Calu3 (cell line): ENCODE measurements at regions of chr4 and their contacts with region 1.

Region 1: DNA sequence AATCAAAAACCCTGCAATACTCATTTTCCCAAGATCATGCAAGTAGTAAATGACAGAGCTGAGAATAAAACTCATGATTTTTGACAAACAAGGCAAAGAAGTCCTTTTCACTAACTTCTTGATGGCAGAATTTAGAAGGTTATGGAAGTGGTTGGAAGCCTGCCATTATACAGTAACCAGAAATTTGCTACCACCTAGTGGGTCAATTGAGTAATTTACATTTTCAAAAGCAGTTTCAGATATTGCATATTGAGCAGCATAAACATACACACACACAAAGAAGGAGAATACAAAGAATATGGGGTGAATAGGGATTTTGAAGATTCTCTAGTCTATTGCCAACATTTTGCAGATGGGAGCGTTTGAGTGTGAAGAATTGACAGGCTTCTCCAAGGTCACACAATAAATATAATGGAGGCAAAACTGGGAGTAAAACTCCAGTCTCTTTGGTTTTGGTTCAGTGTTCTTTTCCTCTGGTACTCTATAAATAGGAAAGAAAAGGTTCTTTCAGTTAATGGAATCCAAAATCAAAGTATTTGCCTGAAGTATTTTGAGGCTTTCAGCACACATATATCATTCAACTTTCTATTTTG is 70.2 kb downstream of the GC start:
- DNase-seq: no peak
- H3K4me3 Mint-ChIP-seq: no peak overlapping the region
- H3K27ac Mint-ChIP-seq: no peak overlapping the region
- H3K4me1 Mint-ChIP-seq: peaks cover 9% of the 10 kb centered on the region
- H3K27me3 Mint-ChIP-seq: no peaks in the 10 kb centered on the region
- CTCF ChIP-seq: peak; percentile 44

Region 2: GRCh38 chr4:70651864-70652506 is 1061.7 kb before region 1 on chr4:
- CTCF ChIA-PET with region 1: no interaction called
- intact Hi-C with region 1: loop called (anchors 2 kb)
- DNase-seq: no peak
- H3K4me3 Mint-ChIP-seq: no peak overlapping the region
- H3K27ac Mint-ChIP-seq: no peak overlapping the region
- H3K4me1 Mint-ChIP-seq: no peaks in the 10 kb centered on the region
- H3K27me3 Mint-ChIP-seq: no peaks in the 10 kb centered on the region
- CTCF ChIP-seq: peak; percentile 29

Region 3: DNA sequence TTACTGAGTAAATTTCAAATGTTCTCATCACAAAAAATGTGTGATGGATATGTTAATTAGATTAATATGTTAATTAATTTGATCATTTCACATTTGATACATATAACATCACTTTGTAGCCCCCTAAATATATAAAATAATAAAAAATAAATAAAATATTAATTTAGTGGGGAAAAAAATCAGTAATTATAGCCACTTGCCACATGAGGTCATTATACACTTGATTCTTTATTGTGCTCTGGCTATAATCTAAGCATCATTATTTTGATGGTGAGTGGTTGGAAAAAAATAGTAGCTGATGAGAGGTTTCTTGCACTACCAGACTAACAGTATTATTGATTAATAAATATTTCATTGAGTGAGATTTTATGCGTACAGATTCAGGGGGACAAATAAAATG is 662.9 kb before region 1 on chr4:
- CTCF ChIA-PET with region 1: interaction called, 4 read pairs
- intact Hi-C with region 1: loop called (anchors 2 kb)
- DNase-seq: no peak
- H3K4me3 Mint-ChIP-seq: no peak overlapping the region
- H3K27ac Mint-ChIP-seq: no peak overlapping the region
- H3K4me1 Mint-ChIP-seq: no peaks in the 10 kb centered on the region
- H3K27me3 Mint-ChIP-seq: no peaks in the 10 kb centered on the region
- CTCF ChIP-seq: no peak

Region 4: DNA sequence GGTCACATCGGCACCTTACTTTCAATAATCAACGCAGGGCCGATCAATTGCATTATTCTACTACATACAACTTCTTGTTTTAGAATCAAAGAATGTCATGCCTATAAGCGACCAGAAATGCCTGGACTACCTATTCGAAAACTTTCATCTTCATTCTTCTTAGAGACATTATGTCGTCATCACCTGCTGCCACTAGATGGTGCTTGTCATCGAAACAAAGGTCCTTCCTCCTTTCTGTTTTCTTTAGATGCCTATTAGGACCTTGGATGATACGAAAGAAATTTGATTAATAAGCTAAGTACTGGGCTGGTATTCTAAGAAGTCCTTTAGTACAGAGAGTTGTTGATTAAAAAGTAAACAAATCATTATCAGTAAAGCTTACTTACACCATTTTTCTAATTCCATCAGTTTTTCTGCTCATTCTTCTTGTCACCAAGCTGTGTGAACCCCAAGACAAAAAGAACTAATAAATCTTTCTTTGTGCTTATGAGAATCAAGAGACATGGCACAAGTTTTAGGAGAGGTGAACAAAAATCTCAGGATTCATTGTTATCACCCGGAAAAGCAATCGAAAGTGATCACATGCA is 529.4 kb before region 1 on chr4:
- CTCF ChIA-PET with region 1: interaction called, 3 read pairs
- intact Hi-C with region 1: loop called (anchors 5 kb)
- DNase-seq: peak; percentile 26
- H3K4me3 Mint-ChIP-seq: no peak overlapping the region
- H3K27ac Mint-ChIP-seq: no peak overlapping the region
- H3K4me1 Mint-ChIP-seq: no peaks in the 10 kb centered on the region
- H3K27me3 Mint-ChIP-seq: no peaks in the 10 kb centered on the region
- CTCF ChIP-seq: peak; percentile 16

Region 5: GRCh38 chr4:71229477-71230270 is 484.0 kb before region 1 on chr4:
- CTCF ChIA-PET with region 1: no interaction called
- intact Hi-C with region 1: loop called (anchors 2 kb)
- DNase-seq: peak; percentile 15
- H3K4me3 Mint-ChIP-seq: no peak overlapping the region
- H3K27ac Mint-ChIP-seq: no peak overlapping the region
- H3K4me1 Mint-ChIP-seq: peaks cover 25% of the 10 kb centered on the region
- H3K27me3 Mint-ChIP-seq: no peaks in the 10 kb centered on the region
- CTCF ChIP-seq: peak; percentile 40

Region 6: DNA sequence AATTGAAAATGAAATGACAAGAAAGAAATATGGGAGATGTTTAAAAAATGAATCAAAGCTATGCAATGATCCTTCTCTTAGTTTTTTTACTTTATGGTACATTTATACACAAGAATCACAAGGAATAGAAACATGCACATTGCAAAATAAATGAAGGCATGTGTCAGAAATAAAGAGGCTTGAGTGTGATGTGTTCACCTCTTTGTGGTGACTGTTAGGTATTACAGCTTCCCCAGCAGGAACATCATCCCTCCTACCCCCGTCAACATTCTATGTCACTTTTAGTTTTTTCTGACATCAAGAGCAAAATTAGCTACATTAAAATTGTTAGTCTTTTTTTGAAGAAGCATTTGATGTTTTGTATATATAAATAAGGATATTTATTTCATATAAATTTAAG is 160.1 kb before region 1 on chr4:
- CTCF ChIA-PET with region 1: no interaction called
- intact Hi-C with region 1: loop called (anchors 5 kb)
- DNase-seq: peak; percentile 1
- H3K4me3 Mint-ChIP-seq: no peak overlapping the region
- H3K27ac Mint-ChIP-seq: no peak overlapping the region
- H3K4me1 Mint-ChIP-seq: peaks cover 22% of the 10 kb centered on the region
- H3K27me3 Mint-ChIP-seq: no peaks in the 10 kb centered on the region
- CTCF ChIP-seq: peak; percentile 32

Region 7: GRCh38 chr4:71604785-71605184 is 108.9 kb before region 1 on chr4:
- CTCF ChIA-PET with region 1: no interaction called
- intact Hi-C with region 1: loop called (anchors 5 kb)
- DNase-seq: no peak
- H3K4me3 Mint-ChIP-seq: peak overlapping the region; percentile 68
- H3K27ac Mint-ChIP-seq: peak overlapping the region; percentile 89
- H3K4me1 Mint-ChIP-seq: peaks cover 49% of the 10 kb centered on the region
- H3K27me3 Mint-ChIP-seq: no peaks in the 10 kb centered on the region
- CTCF ChIP-seq: no peak

Region 8: DNA sequence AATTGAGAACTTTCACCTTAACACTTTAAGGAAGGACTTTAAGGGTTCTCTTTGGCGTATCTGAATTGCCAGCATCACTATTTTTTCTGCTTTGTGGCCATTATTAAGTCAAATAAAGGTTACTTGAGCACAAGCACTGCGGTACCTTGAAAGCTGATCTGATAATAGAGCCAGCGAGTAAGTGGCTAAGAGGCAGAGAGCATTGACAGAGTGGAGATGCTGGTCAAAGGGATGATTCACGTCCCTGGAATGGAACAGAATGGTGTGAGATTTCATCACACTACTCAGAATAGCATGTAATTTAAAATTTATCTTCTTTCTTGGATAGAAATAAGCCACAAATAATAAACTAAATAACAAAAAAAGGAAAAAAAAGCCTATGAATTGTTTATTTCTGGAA is 261.0 kb after region 1 on chr4:
- CTCF ChIA-PET with region 1: no interaction called
- intact Hi-C with region 1: no loop called
- DNase-seq: peak; percentile 38
- H3K4me3 Mint-ChIP-seq: no peak overlapping the region
- H3K27ac Mint-ChIP-seq: peak overlapping the region; percentile 59
- H3K4me1 Mint-ChIP-seq: peaks cover 23% of the 10 kb centered on the region
- H3K27me3 Mint-ChIP-seq: no peaks in the 10 kb centered on the region
- CTCF ChIP-seq: no peak